ENCODE measurements at regions of chr4 and their contacts with region 1.

Region 1: GRCh38 chr4:40056716-40057585 is at the start of gene N4BP2:
- DNase-seq: peak; percentile 82 to 90
- ATAC-seq: peak; percentile 81 to 87 (median 84)
- H3K4me3 ChIP-seq: peak within 1 kb of the TSS; percentile 86
- H3K27ac ChIP-seq: peak within 1 kb of the TSS; percentile 98
- H3K4me1 ChIP-seq: peaks cover 15% of the 10 kb centered on the region
- H3K27me3 ChIP-seq: no peaks in the 10 kb centered on the region
- CTCF ChIP-seq: peak; percentile 72
- total RNA-seq, gene N4BP2: 2.7 to 6.8 (median 3.2) TPM

Region 2: GRCh38 chr4:40265910-40266274 is 208.9 kb after region 1 on chr4:
- intact Hi-C with region 1: no loop called
- DNase-seq: no peak
- ATAC-seq: no peak
- H3K4me3 ChIP-seq: no peak overlapping the region
- H3K27ac ChIP-seq: no peak overlapping the region
- H3K4me1 ChIP-seq: no peaks in the 10 kb centered on the region
- H3K27me3 ChIP-seq: no peaks in the 10 kb centered on the region
- CTCF ChIP-seq: no peak

Region 3: GRCh38 chr4:40316782-40317635 is 260.1 kb after region 1 on chr4:
- intact Hi-C with region 1: loop called in 1 of 2 experiments (anchors 10 kb)
- DNase-seq: no peak
- ATAC-seq: peak; percentile 57 to 88 (median 70)
- H3K4me3 ChIP-seq: peak overlapping the region; percentile 49
- H3K27ac ChIP-seq: peak overlapping the region; percentile 65
- H3K4me1 ChIP-seq: peaks cover 9% of the 10 kb centered on the region
- H3K27me3 ChIP-seq: no peaks in the 10 kb centered on the region
- CTCF ChIP-seq: peak; percentile 76

Region 4: GRCh38 chr4:40349561-40350198 is 292.7 kb after region 1 on chr4:
- intact Hi-C with region 1: no loop called
- DNase-seq: no peak
- ATAC-seq: no peak
- H3K4me3 ChIP-seq: no peak overlapping the region
- H3K27ac ChIP-seq: no peak overlapping the region
- H3K4me1 ChIP-seq: no peaks in the 10 kb centered on the region
- H3K27me3 ChIP-seq: peaks cover 0 to 4% (median 0%) of the 10 kb centered on the region in 3 donors
- CTCF ChIP-seq: no peak

Measured in psoas muscle (tissue), 8 donors.